ENCODE measurements at regions of chr16 and their contacts with region 1.

Region 1: DNA sequence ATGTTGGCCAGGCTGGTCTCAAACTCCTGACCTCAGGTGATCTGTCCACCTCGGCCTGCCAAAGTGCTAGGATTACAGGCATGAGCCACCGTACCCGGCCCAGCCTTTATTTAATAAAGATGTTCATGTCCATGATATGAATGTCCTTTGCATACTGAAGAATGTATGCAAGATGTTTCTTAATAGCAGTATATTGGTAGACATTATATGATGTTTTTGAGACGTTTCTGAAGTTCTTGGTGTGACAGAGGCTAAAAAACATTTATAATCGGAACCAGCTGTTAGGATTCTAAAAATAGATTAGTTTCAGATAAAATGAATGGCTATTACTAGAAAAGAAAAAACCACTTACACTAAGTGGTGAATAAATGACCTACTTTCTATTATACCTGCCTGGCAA is 11.8 kb downstream of the PDZD9 start:
- DNase-seq: no peak
- H3K4me3 ChIP-seq: no peak overlapping the region
- H3K4me3 Mint-ChIP-seq: no peak overlapping the region
- H3K27ac Mint-ChIP-seq: no peak overlapping the region
- H3K4me1 ChIP-seq: no peaks in the 10 kb centered on the region
- H3K4me1 Mint-ChIP-seq: no peaks in the 10 kb centered on the region
- H3K27me3 ChIP-seq: no peaks in the 10 kb centered on the region
- H3K27me3 Mint-ChIP-seq: no peaks in the 10 kb centered on the region
- CTCF ChIP-seq: no peak

Region 2: DNA sequence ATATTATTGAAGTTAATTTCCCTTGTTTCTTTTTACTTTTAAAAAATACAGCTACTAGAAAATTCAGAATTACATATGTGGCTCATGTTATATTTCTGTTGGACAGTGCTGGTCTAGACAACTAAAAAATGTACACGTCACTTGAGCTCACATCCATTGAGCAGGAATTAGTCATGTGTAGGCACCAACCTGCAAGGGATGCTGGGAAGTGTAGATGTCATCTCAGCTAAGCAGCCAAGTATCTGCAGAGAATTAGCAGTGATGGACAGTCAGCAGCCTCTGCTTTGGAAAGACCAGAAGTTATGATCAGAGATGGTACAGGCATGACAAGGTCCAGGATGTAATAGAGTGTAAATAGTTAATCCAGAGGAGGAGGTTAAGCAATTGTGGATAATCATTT is 737.7 kb after region 1 on chr16:
- CTCF ChIA-PET with region 1: no interaction called
- POLR2A ChIA-PET with region 1: interaction called, 10 read pairs
- intact Hi-C with region 1: no loop called
- DNase-seq: no peak
- H3K4me3 ChIP-seq: no peak overlapping the region
- H3K4me3 Mint-ChIP-seq: no peak overlapping the region
- H3K27ac Mint-ChIP-seq: no peak overlapping the region
- H3K4me1 ChIP-seq: no peaks in the 10 kb centered on the region
- H3K4me1 Mint-ChIP-seq: no peaks in the 10 kb centered on the region
- H3K27me3 ChIP-seq: no peaks in the 10 kb centered on the region
- H3K27me3 Mint-ChIP-seq: peaks cover 6% of the 10 kb centered on the region
- CTCF ChIP-seq: no peak